Right ventricle myocardium inferior (tissue), 1 donor: ENCODE measurements at regions of chr14 and their contacts with region 1.

Region 1: GRCh38 chr14:53306267-53306721 is 153.2 kb upstream of the DDHD1 start:
- DNase-seq: peak; percentile 71
- ATAC-seq: peak; percentile 79

Region 2: DNA sequence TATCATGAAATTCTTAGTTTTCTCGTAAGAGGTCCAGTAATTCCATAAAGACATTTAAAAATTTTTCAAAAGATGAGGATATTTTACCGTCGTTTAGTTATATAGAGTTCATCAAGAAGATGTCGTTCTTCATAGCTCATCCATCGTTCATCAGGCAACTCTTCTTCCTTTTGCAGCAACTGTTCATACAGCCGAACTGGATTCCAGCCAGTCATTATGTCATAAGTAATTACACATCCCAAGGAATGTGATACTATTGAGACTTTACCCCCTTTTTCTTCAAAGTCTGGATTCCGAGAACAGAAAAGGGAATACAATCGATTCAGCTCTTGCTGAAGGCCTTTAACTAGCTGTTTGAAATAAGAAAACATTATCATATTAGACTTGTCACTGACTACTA is 243.4 kb before region 1 on chr14:
- intact Hi-C with region 1: loop called (anchors 10 kb)
- DNase-seq: no peak
- ATAC-seq: no peak

Region 3: DNA sequence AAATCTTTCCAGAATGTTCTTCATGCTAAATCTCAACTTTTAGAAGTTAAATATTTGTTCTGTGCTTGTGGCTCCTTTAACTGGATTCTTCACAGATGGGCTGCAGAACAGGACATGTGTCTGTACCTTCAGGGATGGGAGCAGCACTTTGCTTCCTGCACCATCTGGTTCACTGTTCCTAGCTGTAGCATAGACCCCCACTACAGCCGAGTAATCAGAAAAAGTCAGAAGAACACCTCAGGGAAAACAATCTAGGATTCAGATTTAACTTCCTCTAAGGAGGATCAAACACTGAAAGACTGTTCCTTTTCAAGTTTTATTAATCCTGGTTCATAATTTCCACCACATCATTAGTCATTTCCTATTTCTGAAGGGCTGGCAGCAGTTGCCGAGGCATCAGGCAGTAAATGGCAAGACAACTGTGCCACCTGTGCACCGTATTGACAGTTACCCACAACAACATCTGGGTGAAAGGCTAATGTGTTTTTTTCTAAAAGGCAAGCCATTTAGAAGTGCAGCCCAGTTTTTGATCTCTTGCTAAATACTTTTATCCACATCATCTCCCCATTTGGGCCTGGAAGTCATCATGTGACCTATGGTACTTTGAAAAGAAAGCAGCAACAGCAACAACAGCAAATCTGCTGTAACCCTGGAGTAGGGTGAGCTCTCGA is 863.1 kb after region 1 on chr14:
- intact Hi-C with region 1: no loop called
- DNase-seq: no peak
- ATAC-seq: no peak